ENCODE measurements at regions of chr10 and their contacts with region 1.

Region 1: GRCh38 chr10:48656241-48656913 is 28.3 kb upstream of the WDFY4 start:
- DNase-seq: peak; percentile 90
- ATAC-seq: peak; percentile 91
- H3K4me3 ChIP-seq: peak overlapping the region; percentile 68
- H3K27ac ChIP-seq: no peak overlapping the region
- H3K4me1 ChIP-seq: peaks cover 11% of the 10 kb centered on the region
- H3K27me3 ChIP-seq: no peaks in the 10 kb centered on the region
- CTCF ChIP-seq: peak; percentile 86 to 100 (median 96); a peak in 5 of 6 replicates
- EP300 ChIP-seq: no peak
- POLR2A ChIP-seq: 0 out of 2 replicates have a peak, but pooled peaks have one; percentile 43
- RAD21 ChIP-seq: peak; percentile 93

Region 2: GRCh38 chr10:48363617-48364355 is 292.6 kb before region 1 on chr10:
- CTCF ChIA-PET with region 1: interaction called, 89 read pairs
- POLR2A ChIA-PET with region 1: no interaction called
- RAD21 ChIA-PET with region 1: interaction called, 24 read pairs
- SMC1A ChIA-PET with region 1: interaction called, 50 read pairs
- in situ Hi-C with region 1: loop called (anchors 5 kb)
- intact Hi-C with region 1: loop called (anchors 1 kb)
- DNase-seq: peak; percentile 51
- ATAC-seq: peak; percentile 91
- H3K4me3 ChIP-seq: no peak overlapping the region
- H3K27ac ChIP-seq: no peak overlapping the region
- H3K4me1 ChIP-seq: no peaks in the 10 kb centered on the region
- H3K27me3 ChIP-seq: no peaks in the 10 kb centered on the region
- CTCF ChIP-seq: peak; percentile 55 to 83 (median 74)
- EP300 ChIP-seq: no peak
- POLR2A ChIP-seq: no peak
- RAD21 ChIP-seq: peak; percentile 93

Region 3: GRCh38 chr10:48564466-48565160 is 91.8 kb before region 1 on chr10:
- CTCF ChIA-PET with region 1: interaction called, 436 read pairs
- POLR2A ChIA-PET with region 1: no interaction called
- RAD21 ChIA-PET with region 1: interaction called, 333 read pairs
- SMC1A ChIA-PET with region 1: interaction called, 47 read pairs
- in situ Hi-C with region 1: no loop called
- intact Hi-C with region 1: no loop called
- DNase-seq: no peak
- ATAC-seq: no peak
- H3K4me3 ChIP-seq: no peak overlapping the region
- H3K27ac ChIP-seq: no peak overlapping the region
- H3K4me1 ChIP-seq: no peaks in the 10 kb centered on the region
- H3K27me3 ChIP-seq: no peaks in the 10 kb centered on the region
- CTCF ChIP-seq: no peak
- EP300 ChIP-seq: no peak
- POLR2A ChIP-seq: no peak
- RAD21 ChIP-seq: no peak

Region 4: GRCh38 chr10:48623607-48624132 is 32.7 kb before region 1 on chr10:
- CTCF ChIA-PET with region 1: interaction called, 42 read pairs
- POLR2A ChIA-PET with region 1: no interaction called
- RAD21 ChIA-PET with region 1: interaction called, 33 read pairs
- SMC1A ChIA-PET with region 1: interaction called, 20 read pairs
- in situ Hi-C with region 1: no loop called
- intact Hi-C with region 1: no loop called
- DNase-seq: no peak
- ATAC-seq: no peak
- H3K4me3 ChIP-seq: no peak overlapping the region
- H3K27ac ChIP-seq: no peak overlapping the region
- H3K4me1 ChIP-seq: peaks cover 4% of the 10 kb centered on the region; the same call in 1 of the 2 replicates
- H3K27me3 ChIP-seq: no peaks in the 10 kb centered on the region
- CTCF ChIP-seq: no peak
- EP300 ChIP-seq: no peak
- POLR2A ChIP-seq: no peak
- RAD21 ChIP-seq: no peak

Region 5: DNA sequence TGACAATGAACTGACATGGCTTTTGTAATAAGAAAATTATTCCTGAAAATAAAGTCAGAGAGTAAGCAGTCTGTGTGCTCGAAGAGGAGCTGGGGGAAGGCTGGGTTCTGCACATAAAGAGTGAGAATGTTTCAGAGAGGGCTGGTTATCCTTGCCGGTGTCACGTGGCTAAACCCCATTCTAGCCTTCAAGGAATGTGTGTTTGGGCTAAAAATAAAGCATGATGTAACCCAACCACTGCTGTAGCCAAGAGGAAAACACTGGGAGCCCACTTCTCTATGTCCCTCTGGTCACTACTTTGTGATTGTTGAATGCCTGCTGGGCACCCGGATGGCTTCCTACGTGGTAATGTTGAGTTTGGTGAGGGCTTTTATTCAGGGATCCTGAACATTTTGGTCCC is 51.8 kb after region 1 on chr10:
- CTCF ChIA-PET with region 1: interaction called, 221 read pairs
- POLR2A ChIA-PET with region 1: no interaction called
- RAD21 ChIA-PET with region 1: interaction called, 171 read pairs
- SMC1A ChIA-PET with region 1: interaction called, 170 read pairs
- in situ Hi-C with region 1: no loop called
- intact Hi-C with region 1: no loop called
- DNase-seq: no peak
- ATAC-seq: no peak
- H3K4me3 ChIP-seq: no peak overlapping the region
- H3K27ac ChIP-seq: no peak overlapping the region
- H3K4me1 ChIP-seq: peaks cover 12% of the 10 kb centered on the region
- H3K27me3 ChIP-seq: no peaks in the 10 kb centered on the region
- CTCF ChIP-seq: no peak
- EP300 ChIP-seq: no peak
- POLR2A ChIP-seq: no peak
- RAD21 ChIP-seq: no peak

Region 6: GRCh38 chr10:48913674-48914073 is 257.3 kb after region 1 on chr10:
- CTCF ChIA-PET with region 1: interaction called, 4 read pairs
- POLR2A ChIA-PET with region 1: no interaction called
- RAD21 ChIA-PET with region 1: interaction called, 4 read pairs
- SMC1A ChIA-PET with region 1: interaction called, 3 read pairs
- in situ Hi-C with region 1: no loop called
- intact Hi-C with region 1: loop called (anchors 2 kb)
- DNase-seq: no peak
- ATAC-seq: no peak
- H3K4me3 ChIP-seq: no peak overlapping the region
- H3K27ac ChIP-seq: no peak overlapping the region
- H3K4me1 ChIP-seq: no peaks in the 10 kb centered on the region
- H3K27me3 ChIP-seq: no peaks in the 10 kb centered on the region
- CTCF ChIP-seq: no peak
- EP300 ChIP-seq: no peak
- POLR2A ChIP-seq: no peak
- RAD21 ChIP-seq: no peak

Region 7: DNA sequence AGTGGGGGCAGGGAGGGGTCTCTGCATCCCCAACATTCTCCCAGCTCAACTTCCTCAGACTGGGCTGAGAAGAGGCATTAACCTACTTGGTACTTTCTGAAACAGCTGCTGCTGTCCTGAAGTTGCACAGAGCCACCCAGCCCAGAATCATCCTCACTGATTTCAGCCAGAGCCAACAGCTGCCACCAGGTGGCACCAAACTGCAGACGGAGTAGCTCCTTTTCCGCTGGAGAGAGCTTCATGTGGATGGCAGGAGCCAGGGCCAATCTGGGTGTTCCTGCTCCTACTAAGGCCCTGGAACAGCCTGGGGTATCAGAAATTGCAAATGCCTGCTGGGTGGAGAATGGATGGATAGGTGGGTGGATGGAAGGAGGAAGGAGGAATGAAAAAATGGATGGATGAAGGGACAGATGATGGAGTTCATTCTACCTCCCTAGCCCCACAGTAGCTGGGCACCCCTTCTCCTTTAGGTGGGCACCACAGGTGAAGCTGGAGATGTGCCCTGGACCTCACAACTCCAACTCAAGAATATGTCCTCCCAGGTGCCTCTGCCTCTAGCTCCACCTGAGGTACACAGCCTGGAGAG is 751.3 kb after region 1 on chr10:
- CTCF ChIA-PET with region 1: interaction called, 19 read pairs
- POLR2A ChIA-PET with region 1: no interaction called
- RAD21 ChIA-PET with region 1: interaction called, 15 read pairs
- SMC1A ChIA-PET with region 1: interaction called, 11 read pairs
- in situ Hi-C with region 1: no loop called
- intact Hi-C with region 1: no loop called
- DNase-seq: no peak
- ATAC-seq: peak; percentile 96
- H3K4me3 ChIP-seq: no peak overlapping the region
- H3K27ac ChIP-seq: no peak overlapping the region
- H3K4me1 ChIP-seq: no peaks in the 10 kb centered on the region
- H3K27me3 ChIP-seq: peaks cover 0 to 1% of the 10 kb centered on the region in 2 experiments; a peak in 1 of 4 replicates
- CTCF ChIP-seq: peak; percentile 88 to 93 (median 92)
- EP300 ChIP-seq: no peak
- POLR2A ChIP-seq: no peak
- RAD21 ChIP-seq: peak; percentile 81